H1 (cell line): ENCODE measurements at regions of chr11 and their contacts with region 1.

Region 1: GRCh38 chr11:60831143-60831500 is 10.8 kb upstream of the CCDC86 start:
- DNase-seq: peak; percentile 49 to 85
- H3K4me3 ChIP-seq: no peak overlapping the region
- H3K27ac ChIP-seq: no peak overlapping the region
- H3K4me1 ChIP-seq: no peaks in the 10 kb centered on the region
- H3K27me3 ChIP-seq: no peaks in the 10 kb centered on the region; a peak in 1 of 7 replicates
- CTCF ChIP-seq: peak; percentile 88 to 95 (median 92)
- EP300 ChIP-seq: no peak
- POLR2A ChIP-seq: no peak
- RAD21 ChIP-seq: peak; percentile 95 to 97

Region 2: GRCh38 chr11:60775420-60775961 is 55.6 kb before region 1 on chr11:
- CTCF ChIA-PET with region 1: interaction called, 31 read pairs
- POLR2A ChIA-PET with region 1: no interaction called
- DNase-seq: peak; percentile 90 to 94
- H3K4me3 ChIP-seq: no peak overlapping the region
- H3K27ac ChIP-seq: no peak overlapping the region
- H3K4me1 ChIP-seq: no peaks in the 10 kb centered on the region; a peak in 1 of 7 replicates
- H3K27me3 ChIP-seq: no peaks in the 10 kb centered on the region
- CTCF ChIP-seq: peak; percentile 65 to 96 (median 93)
- EP300 ChIP-seq: no peak
- POLR2A ChIP-seq: no peak
- RAD21 ChIP-seq: peak; percentile 81 to 86

Region 3: DNA sequence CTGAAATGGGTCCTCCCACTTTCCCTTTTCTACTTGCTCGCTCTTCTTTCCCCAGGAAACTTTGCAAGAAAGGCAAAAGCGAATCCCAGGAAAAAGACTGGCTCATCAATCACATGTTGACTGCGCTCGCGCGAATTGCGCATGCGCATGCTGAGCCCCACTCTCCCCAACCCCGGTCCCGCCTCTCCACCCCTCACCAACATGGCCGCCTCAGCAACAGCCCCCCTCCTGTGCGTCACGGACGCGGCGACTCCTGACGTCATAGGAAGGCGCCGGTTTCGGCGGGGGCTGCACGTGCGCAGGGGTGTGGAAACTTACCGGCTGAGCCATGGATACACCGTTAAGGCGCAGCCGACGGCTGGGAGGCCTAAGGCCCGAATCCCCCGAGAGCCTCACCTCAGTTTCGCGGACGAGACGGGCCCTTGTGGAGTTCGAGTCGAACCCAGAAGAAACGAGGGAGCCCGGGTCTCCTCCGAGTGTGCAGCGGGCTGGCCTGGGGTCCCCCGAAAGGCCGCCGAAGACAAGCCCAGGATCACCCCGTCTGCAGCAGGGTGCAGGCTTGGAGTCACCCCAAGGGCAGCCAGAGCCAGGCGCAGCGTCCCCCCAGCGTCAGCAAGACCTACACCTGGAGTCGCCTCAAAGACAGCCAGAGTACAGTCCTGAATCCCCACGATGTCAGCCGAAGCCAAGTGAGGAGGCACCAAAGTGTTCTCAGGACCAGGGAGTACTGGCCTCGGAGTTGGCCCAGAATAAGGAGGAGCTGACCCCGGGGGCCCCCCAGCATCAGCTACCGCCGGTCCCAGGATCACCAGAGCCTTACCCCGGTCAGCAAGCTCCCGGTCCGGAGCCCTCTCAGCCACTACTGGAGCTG is 10.9 kb after region 1 on chr11 and contains the start of gene CCDC86:
- CTCF ChIA-PET with region 1: interaction called, 78 read pairs
- POLR2A ChIA-PET with region 1: interaction called, 3 read pairs
- DNase-seq: peak; percentile 95 to 100
- H3K4me3 ChIP-seq: peak within 1 kb of the TSS; percentile 79 to 92 (median 86)
- H3K27ac ChIP-seq: peak within 1 kb of the TSS; percentile 77; the same call in 1 of the 2 replicates
- H3K4me1 ChIP-seq: peaks cover 0 to 21% (median 7%) of the 10 kb centered on the region in 4 experiments; a peak in 6 of 7 replicates
- H3K27me3 ChIP-seq: no peaks in the 10 kb centered on the region
- CTCF ChIP-seq: no peak
- EP300 ChIP-seq: peak in 1 of 2 experiments; percentile 76; a peak in 1 of 3 replicates
- POLR2A ChIP-seq: peak in 1 of 2 experiments; percentile 67; a peak in 2 of 3 replicates
- RAD21 ChIP-seq: no peak
- total RNA-seq, gene CCDC86: 76.4 and 77.1 TPM in 2 replicates

Region 4: GRCh38 chr11:60866911-60867870 is 36.1 kb after region 1 on chr11 and contains the start of gene ZP1:
- CTCF ChIA-PET with region 1: interaction called, 44 read pairs
- POLR2A ChIA-PET with region 1: no interaction called
- DNase-seq: no peak
- H3K4me3 ChIP-seq: no peak within 1 kb of the TSS
- H3K27ac ChIP-seq: no peak within 1 kb of the TSS
- H3K4me1 ChIP-seq: no peaks in the 10 kb centered on the region; a peak in 2 of 7 replicates
- H3K27me3 ChIP-seq: no peaks in the 10 kb centered on the region
- CTCF ChIP-seq: no peak
- EP300 ChIP-seq: no peak
- POLR2A ChIP-seq: no peak
- RAD21 ChIP-seq: no peak
- total RNA-seq, gene ZP1: not detected in 2 replicates

Region 5: DNA sequence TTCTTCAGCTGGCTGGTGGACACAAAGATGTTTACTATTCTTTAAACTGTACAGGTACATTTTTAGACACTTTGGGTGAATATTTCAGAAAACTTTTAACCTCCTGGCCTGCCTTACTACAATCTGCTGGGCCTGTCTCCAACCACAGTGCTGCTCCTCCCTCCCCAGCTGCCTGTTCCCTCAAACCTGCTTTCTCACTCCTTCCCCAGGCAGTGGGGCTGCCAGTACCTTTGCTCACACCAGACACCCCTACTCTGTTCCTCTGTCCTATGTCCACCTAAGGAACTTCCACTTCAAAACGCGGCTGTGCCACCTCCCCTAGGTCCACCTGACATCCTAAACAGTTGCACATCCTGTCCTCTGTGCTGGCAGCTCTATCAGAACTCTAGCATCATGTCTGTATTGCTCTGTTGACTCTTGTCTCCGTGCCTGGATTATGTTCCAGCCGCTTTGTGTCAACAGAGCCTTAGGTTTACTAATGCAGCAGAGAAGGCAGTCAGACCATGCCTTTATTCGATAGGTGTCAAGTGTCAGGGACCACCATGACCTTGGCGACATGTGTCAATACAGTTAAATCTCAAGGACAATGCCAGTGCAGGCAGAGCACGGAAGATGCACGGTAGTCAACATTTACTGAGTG is 49.6 kb after region 1 on chr11:
- CTCF ChIA-PET with region 1: interaction called, 522 read pairs
- POLR2A ChIA-PET with region 1: no interaction called
- DNase-seq: no peak
- H3K4me3 ChIP-seq: no peak overlapping the region
- H3K27ac ChIP-seq: no peak overlapping the region
- H3K4me1 ChIP-seq: no peaks in the 10 kb centered on the region
- H3K27me3 ChIP-seq: no peaks in the 10 kb centered on the region
- CTCF ChIP-seq: no peak
- EP300 ChIP-seq: no peak
- POLR2A ChIP-seq: no peak
- RAD21 ChIP-seq: no peak